Tibial artery (tissue), 4 donors: ENCODE measurements at regions of chr4 and their contacts with region 1.

Region 1: GRCh38 chr4:178963446-178964045 is 1521.3 kb upstream of the AGA start:
- DNase-seq: no peak
- H3K4me3 ChIP-seq: no peak overlapping the region
- H3K27ac ChIP-seq: no peak overlapping the region
- H3K4me1 ChIP-seq: no peaks in the 10 kb centered on the region
- H3K27me3 ChIP-seq: no peaks in the 10 kb centered on the region
- CTCF ChIP-seq: no peak

Region 2: GRCh38 chr4:178871476-178871875 is 92.1 kb before region 1 on chr4:
- intact Hi-C with region 1: no loop called
- DNase-seq: no peak
- H3K4me3 ChIP-seq: no peak overlapping the region
- H3K27ac ChIP-seq: no peak overlapping the region
- H3K4me1 ChIP-seq: no peaks in the 10 kb centered on the region
- H3K27me3 ChIP-seq: no peaks in the 10 kb centered on the region
- CTCF ChIP-seq: no peak

Region 3: DNA sequence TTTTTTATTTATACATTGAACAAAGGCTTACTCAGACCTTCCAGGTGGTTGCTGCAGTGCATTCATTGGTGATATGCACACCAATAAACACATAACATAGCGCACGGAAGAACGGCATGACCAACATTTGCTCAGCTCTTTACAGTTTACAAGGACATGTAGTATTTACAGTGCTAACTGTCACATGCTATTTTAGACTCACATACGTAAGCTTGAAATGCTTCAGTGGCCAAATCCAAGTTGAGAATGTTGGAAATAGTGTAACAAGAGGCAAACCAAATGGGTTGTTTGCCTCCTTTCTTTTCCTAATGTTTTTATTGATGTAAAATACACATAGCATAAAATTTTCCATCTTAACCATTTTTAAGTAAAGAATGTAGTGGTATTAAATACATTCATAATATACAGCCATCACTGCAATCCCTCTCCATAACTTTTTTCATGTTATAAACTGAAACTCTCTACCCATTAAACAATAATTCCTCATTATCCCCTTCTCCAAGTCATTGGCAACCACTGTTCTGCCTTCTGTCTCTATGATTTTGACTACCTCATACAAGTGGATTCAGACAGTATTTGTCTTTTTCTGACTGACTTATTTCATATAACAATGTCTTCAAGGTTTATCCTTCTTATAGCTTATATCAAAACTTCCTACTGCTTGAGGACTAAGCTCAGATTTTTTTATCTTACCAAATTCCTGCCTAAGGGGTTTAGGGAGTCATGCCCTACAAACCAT is 201.6 kb after region 1 on chr4:
- intact Hi-C with region 1: loop called (anchors 5 kb)
- DNase-seq: no peak
- H3K4me3 ChIP-seq: no peak overlapping the region
- H3K27ac ChIP-seq: no peak overlapping the region
- H3K4me1 ChIP-seq: no peaks in the 10 kb centered on the region
- H3K27me3 ChIP-seq: no peaks in the 10 kb centered on the region
- CTCF ChIP-seq: no peak